ENCODE measurements at regions of chr17 and their contacts with region 1.

Region 1: DNA sequence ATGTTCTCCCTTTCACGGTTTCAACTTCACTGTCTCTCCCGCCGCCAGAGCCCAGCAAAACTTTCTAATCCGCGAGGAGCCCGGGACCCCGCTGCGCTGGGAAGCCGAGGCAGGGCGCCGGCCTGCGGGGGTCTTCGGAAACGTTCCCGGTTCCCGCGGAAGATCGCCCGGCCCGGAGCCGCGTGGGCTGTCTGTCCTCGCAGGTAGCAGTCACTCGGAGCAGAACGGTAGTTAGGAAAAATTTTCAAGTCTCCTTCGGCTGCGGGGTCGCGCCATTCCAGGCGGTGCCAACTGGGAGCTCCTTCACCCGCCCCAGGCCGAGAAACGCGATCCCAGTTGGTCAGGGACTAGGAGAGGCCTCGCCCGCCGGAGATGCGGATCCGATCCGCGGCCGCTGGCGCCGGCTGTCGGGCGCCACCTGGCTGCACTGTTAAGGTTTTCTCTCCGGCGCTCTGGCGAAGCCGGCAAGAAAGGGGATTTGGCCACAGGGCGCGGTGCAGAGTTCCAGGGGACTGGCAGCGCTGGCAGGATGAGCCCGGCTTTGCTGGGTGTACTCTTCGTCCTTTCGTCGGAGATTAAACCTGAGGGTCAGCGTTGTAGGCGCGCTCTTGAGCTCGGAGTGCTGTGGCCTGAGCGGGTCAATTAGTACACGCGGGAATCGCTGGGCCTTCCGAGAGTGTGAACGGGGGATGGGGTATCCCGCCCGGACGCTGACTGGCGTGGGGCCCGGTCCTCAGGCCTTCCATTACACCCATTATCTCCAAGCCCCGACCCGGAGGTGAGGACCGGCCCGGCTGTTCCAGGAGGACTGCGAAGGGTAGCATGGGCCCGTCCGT is 135.4 kb downstream of the KCNJ12 start:
- DNase-seq: peak; percentile 26 to 80 (median 66)
- ATAC-seq: peak; percentile 72
- H3K4me3 ChIP-seq: peak overlapping the region; percentile 38 to 52
- H3K4me3 Mint-ChIP-seq: peak overlapping the region; percentile 69
- H3K27ac ChIP-seq: no peak overlapping the region
- H3K27ac Mint-ChIP-seq: no peak overlapping the region
- H3K4me1 ChIP-seq: peaks cover 8% of the 10 kb centered on the region
- H3K4me1 Mint-ChIP-seq: peaks cover 10% of the 10 kb centered on the region
- H3K27me3 ChIP-seq: peaks cover 5 to 9% of the 10 kb centered on the region in 2 experiments
- H3K27me3 Mint-ChIP-seq: peaks cover 25% of the 10 kb centered on the region
- CTCF ChIP-seq: peak; percentile 88

Region 2: GRCh38 chr17:20226814-20227482 is 1284.6 kb before region 1 on chr17:
- CTCF ChIA-PET with region 1: no interaction called
- POLR2A ChIA-PET with region 1: no interaction called
- intact Hi-C with region 1: loop called in 1 of 2 experiments (anchors 5 kb)
- DNase-seq: peak; percentile 61 to 88 (median 78)
- ATAC-seq: peak; percentile 93
- H3K4me3 ChIP-seq: no peak overlapping the region
- H3K4me3 Mint-ChIP-seq: no peak overlapping the region
- H3K27ac ChIP-seq: no peak overlapping the region
- H3K27ac Mint-ChIP-seq: no peak overlapping the region
- H3K4me1 ChIP-seq: peaks cover 8% of the 10 kb centered on the region
- H3K4me1 Mint-ChIP-seq: peaks cover 15% of the 10 kb centered on the region
- H3K27me3 ChIP-seq: no peaks in the 10 kb centered on the region
- H3K27me3 Mint-ChIP-seq: peaks cover 5% of the 10 kb centered on the region
- CTCF ChIP-seq: peak; percentile 71

Region 3: DNA sequence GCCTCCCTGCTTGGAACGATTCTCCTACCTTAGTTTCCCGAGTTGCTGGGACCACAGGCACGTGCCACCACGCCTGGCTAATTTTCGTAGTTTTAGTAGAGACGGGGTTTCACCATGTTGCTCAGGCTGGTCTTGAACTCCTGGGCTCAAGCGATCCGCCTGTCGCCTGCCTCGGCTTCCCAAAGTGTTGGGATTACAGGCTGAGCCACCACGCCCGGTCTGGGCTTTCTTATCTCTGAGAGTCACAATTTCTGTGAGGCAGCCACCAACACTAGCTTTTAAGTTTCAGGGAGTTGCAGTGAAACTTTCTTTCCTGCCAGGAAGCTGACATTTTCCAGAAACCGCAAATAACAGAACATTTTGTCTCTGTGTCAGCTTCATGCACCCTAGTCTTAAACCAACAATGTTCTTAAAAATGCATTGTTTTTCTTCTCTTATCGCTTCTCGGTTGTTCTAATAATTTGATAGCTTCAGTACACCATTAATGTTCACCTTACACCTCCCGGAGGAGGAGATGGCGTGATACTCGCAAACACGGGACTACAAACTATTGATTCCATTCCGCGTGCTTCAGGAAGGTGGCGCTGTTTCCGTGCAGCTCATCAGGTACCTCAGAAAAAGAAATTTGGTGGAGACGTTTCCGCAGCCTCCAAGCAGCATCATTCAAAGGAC is 392.2 kb before region 1 on chr17:
- CTCF ChIA-PET with region 1: interaction called, 68 read pairs
- POLR2A ChIA-PET with region 1: no interaction called
- intact Hi-C with region 1: loop called (anchors 1 kb)
- DNase-seq: peak; percentile 41 to 87 (median 71)
- ATAC-seq: peak; percentile 91
- H3K4me3 ChIP-seq: no peak overlapping the region
- H3K4me3 Mint-ChIP-seq: no peak overlapping the region
- H3K27ac ChIP-seq: no peak overlapping the region
- H3K27ac Mint-ChIP-seq: no peak overlapping the region
- H3K4me1 ChIP-seq: peaks cover 4% of the 10 kb centered on the region
- H3K4me1 Mint-ChIP-seq: peaks cover 8% of the 10 kb centered on the region
- H3K27me3 ChIP-seq: no peaks in the 10 kb centered on the region
- H3K27me3 Mint-ChIP-seq: peaks cover 3% of the 10 kb centered on the region
- CTCF ChIP-seq: peak; percentile 82

Region 4: DNA sequence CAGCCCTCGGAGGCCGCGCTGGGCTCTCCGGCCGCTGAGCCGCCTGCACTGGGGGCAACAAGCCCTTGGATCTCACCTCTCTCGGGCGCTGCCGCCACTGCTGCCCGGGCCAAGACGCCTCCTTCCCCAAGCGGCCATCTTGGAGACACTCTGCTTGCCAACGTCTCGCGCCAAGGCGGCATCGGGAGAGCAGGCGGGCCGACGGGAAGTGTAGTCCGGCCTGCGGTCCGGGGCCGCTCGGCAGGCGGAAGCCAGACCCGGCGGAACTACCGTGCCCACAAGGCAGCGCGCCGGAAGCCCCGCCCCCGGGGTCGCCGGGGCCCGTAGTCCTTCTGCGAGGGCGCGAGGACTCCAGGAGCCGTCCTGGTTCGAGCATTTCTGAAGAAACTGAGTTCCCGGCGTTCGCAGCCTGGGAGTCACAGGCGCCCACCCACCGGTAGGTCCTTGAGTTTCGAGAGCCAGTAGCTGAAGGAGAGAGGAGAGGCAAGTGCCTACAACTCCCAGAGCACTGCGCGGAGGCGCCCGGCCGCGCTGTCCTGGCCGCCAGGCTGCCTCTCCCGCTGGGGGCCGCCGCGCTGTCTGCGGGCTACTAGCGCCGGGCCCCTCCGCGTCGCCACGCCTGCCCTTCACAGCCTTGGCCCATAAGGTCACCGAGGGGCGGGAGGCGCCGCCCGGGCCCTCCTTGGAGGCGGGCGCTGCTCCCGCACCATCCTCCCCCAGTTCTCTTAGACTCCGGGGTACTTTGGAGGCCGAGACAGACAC is 297.4 kb before region 1 on chr17 and contains the start of gene TMEM11:
- CTCF ChIA-PET with region 1: interaction called, 4 read pairs
- POLR2A ChIA-PET with region 1: no interaction called
- intact Hi-C with region 1: loop called in 1 of 2 experiments (anchors 1 kb)
- DNase-seq: peak; percentile 89 to 97 (median 94)
- ATAC-seq: peak; percentile 92
- H3K4me3 ChIP-seq: peak within 1 kb of the TSS; percentile 87 to 100
- H3K4me3 Mint-ChIP-seq: peak within 1 kb of the TSS; percentile 94
- H3K27ac ChIP-seq: peak within 1 kb of the TSS; percentile 84 to 95
- H3K27ac Mint-ChIP-seq: peak within 1 kb of the TSS; percentile 93
- H3K4me1 ChIP-seq: peaks cover 38% of the 10 kb centered on the region
- H3K4me1 Mint-ChIP-seq: peaks cover 52% of the 10 kb centered on the region
- H3K27me3 ChIP-seq: no peaks in the 10 kb centered on the region
- H3K27me3 Mint-ChIP-seq: no peaks in the 10 kb centered on the region
- CTCF ChIP-seq: peak; percentile 26
- total RNA-seq, gene TMEM11: 23.4 to 26.2 TPM

Region 5: DNA sequence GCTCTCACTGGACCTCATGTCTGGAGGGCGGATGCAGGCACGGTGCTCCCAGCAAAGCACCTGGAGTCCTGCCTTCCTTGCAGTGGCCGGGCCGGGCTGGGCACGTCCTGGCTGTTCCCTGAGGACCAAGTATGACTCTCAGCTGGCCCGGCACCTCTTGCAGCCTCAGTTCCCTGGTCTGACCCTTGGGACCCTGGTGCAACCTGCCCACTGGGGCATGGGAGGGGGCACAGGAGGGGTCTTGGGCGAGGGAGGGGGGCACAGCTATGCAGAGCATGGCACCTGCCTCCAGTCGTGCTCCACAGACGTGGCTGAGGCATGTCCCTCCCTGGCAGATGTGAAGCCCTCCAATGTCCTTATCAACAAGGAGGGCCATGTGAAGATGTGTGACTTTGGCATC is 207.5 kb before region 1 on chr17:
- CTCF ChIA-PET with region 1: no interaction called
- POLR2A ChIA-PET with region 1: no interaction called
- intact Hi-C with region 1: no loop called
- DNase-seq: no peak
- ATAC-seq: no peak
- H3K4me3 ChIP-seq: no peak overlapping the region
- H3K4me3 Mint-ChIP-seq: no peak overlapping the region
- H3K27ac ChIP-seq: no peak overlapping the region
- H3K27ac Mint-ChIP-seq: no peak overlapping the region
- H3K4me1 ChIP-seq: no peaks in the 10 kb centered on the region
- H3K4me1 Mint-ChIP-seq: no peaks in the 10 kb centered on the region
- H3K27me3 ChIP-seq: no peaks in the 10 kb centered on the region
- H3K27me3 Mint-ChIP-seq: no peaks in the 10 kb centered on the region
- CTCF ChIP-seq: no peak

Region 6: GRCh38 chr17:21318439-21318838 is 193.1 kb before region 1 on chr17:
- CTCF ChIA-PET with region 1: interaction called, 10 read pairs
- POLR2A ChIA-PET with region 1: no interaction called
- intact Hi-C with region 1: loop called in 1 of 2 experiments (anchors 2 kb)
- DNase-seq: no peak
- ATAC-seq: no peak
- H3K4me3 ChIP-seq: no peak overlapping the region
- H3K4me3 Mint-ChIP-seq: no peak overlapping the region
- H3K27ac ChIP-seq: no peak overlapping the region
- H3K27ac Mint-ChIP-seq: no peak overlapping the region
- H3K4me1 ChIP-seq: no peaks in the 10 kb centered on the region
- H3K4me1 Mint-ChIP-seq: peaks cover 5% of the 10 kb centered on the region
- H3K27me3 ChIP-seq: no peaks in the 10 kb centered on the region
- H3K27me3 Mint-ChIP-seq: no peaks in the 10 kb centered on the region
- CTCF ChIP-seq: no peak

Region 7: GRCh38 chr17:21524211-21524591 is 12.6 kb after region 1 on chr17:
- CTCF ChIA-PET with region 1: interaction called, 28 read pairs
- POLR2A ChIA-PET with region 1: no interaction called
- intact Hi-C with region 1: no loop called
- DNase-seq: no peak
- ATAC-seq: no peak
- H3K4me3 ChIP-seq: no peak overlapping the region
- H3K4me3 Mint-ChIP-seq: no peak overlapping the region
- H3K27ac ChIP-seq: no peak overlapping the region
- H3K27ac Mint-ChIP-seq: no peak overlapping the region
- H3K4me1 ChIP-seq: no peaks in the 10 kb centered on the region
- H3K4me1 Mint-ChIP-seq: no peaks in the 10 kb centered on the region
- H3K27me3 ChIP-seq: no peaks in the 10 kb centered on the region
- H3K27me3 Mint-ChIP-seq: peaks cover 20% of the 10 kb centered on the region
- CTCF ChIP-seq: no peak